ENCODE measurements at regions of chr13 and their contacts with region 1.

Region 1: DNA sequence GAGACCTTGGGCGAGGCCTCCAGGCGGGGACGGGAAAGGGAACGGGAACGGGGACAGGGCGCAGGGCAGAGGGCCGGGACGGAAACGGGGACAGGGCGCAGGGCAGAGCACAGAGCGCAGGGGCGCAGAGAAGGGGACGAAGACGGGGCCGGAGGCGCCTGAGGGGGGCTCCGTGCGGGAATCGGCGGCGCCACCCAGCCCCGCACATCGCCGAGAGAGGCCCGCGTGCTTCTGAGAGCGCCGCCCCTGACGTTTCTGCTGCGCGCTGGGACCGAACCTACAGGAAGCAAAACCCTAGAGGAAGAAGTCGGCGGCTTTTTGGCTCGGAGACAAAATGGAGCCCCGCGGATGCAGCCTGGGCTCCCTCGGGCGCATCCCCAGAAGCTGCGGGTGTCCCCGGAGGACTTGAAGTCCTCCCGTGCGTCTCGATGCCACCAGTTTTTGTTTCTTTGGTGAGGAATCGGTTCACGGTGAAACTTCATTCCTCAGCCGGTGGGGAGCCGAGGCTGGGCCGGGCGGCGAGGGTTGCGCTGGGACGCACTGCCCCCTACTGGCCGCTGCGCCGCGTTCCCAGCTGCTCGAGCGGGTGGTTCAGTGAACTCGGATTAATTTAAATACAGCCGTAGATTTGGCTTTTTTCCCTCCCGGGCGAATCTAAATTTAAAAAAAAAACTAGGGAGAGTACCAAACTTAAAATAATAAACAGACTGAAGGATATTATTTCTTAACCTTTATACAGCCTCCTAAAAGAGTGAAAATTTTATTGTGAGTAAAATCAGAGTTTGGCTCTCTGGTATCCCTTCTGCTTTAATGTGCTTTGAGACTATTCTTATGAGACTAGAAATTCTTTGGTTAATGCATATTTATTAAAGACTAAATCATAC is 350.0 kb upstream of the ARGLU1 start:
- DNase-seq: peak; percentile 77 to 82
- ATAC-seq: peak; percentile 86 to 93 (median 90)
- H3K4me3 ChIP-seq: peak overlapping the region; percentile 45 to 76 (median 63)
- H3K27ac ChIP-seq: peak overlapping the region; percentile 84 to 98 (median 95)
- H3K4me1 ChIP-seq: peaks cover 0 to 48% (median 17%) of the 10 kb centered on the region in 9 donors
- H3K27me3 ChIP-seq: peaks cover 0 to 3% (median 0%) of the 10 kb centered on the region in 7 donors
- CTCF ChIP-seq: peak; percentile 87 to 98 (median 95)

Region 2: DNA sequence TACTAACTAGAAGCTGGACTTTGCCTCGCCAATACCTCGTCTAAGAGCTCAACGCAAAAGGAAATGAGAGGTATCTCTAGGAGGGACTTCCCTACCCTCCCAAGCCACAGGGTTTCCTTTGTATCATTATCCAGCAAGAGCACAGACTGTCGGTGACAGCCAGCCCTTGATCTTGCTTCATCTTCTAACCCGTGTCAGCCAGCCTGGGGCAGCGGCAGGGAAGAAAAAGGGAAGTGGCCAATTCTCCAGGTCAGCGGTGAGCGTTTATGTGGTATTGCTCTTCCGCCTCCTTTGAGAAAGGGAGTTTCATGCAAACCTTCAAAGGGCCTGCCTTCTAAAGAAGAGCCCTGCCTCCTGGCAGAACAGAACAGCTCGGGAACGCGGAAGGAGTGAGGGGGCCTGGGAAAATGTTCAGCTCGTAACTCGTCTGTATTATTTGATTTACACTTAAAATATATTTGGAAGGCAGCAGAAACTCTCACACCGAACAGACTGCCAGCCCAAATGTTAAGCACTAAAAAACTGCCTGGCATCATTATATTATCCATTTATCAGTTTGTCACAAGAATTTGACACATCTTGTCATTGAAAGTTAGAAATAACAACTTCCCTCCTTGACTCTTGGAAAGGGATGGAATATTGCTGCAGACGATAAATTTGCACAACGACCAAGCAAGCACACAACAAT is 424.2 kb before region 1 on chr13:
- intact Hi-C with region 1: loop called in 1 of 10 experiments (anchors 5 kb)
- DNase-seq: no peak
- ATAC-seq: peak in 1 of 8 donors; percentile 26
- H3K4me3 ChIP-seq: peak overlapping the region in 1 of 10 donors; percentile 16
- H3K27ac ChIP-seq: peak overlapping the region in 3 of 10 donors; percentile 7 to 61 (median 37)
- H3K4me1 ChIP-seq: peaks cover 0 to 86% (median 36%) of the 10 kb centered on the region in 9 donors
- H3K27me3 ChIP-seq: peaks cover 0 to 36% (median 0%) of the 10 kb centered on the region in 7 donors
- CTCF ChIP-seq: no peak

Region 3: DNA sequence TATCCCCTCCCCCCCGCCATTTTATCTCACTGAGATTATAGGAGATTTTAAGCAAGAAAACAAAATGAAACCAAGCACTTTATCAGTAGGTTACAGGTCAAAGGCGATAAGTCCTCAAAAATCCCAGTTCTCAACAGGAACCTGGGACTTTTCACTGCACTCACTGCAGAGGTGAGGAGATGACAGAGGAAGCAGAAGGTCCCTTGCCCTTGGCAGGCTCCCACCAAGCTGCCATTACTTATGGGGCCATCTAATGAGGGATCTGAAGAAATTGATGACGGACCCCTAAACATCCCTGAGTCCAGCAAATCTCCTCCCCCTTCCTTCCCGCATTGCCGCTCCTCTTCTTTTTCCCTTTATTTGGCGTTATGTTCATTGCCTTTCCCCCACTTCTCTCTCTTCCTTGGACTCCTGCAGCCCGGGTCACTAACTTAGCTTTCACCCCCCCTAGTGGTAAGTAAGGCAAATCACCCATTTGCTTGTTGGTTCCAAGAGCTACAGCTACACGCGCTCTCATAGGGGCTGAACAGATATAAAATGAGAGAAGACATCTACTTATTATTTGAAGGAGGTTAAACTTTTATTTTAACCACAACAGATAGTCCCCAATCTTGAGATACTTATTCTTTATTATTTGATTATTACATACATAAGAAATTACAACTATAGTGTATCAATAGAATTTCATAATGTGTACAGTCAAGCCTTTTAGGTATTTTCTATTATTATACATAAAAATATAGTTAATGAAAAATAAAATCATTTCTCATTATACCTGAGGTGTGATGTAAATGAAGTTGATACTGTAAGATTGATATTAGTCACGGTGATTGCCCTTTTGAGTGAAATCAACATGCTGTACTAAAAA is 298.0 kb before region 1 on chr13:
- intact Hi-C with region 1: loop called in 4 of 10 experiments (anchors 5 to 10 kb)
- DNase-seq: peak in 1 of 2 donors; percentile 53
- ATAC-seq: peak; percentile 79 to 94 (median 90)
- H3K4me3 ChIP-seq: peak overlapping the region in 7 of 10 donors; percentile 12 to 45 (median 34)
- H3K27ac ChIP-seq: peak overlapping the region in 5 of 10 donors; percentile 33 to 71 (median 48)
- H3K4me1 ChIP-seq: peaks cover 0 to 33% (median 10%) of the 10 kb centered on the region in 9 donors
- H3K27me3 ChIP-seq: peaks cover 0 to 36% (median 0%) of the 10 kb centered on the region in 7 donors
- CTCF ChIP-seq: peak; percentile 71 to 86 (median 81)

Region 4: GRCh38 chr13:106701771-106702341 is 216.1 kb before region 1 on chr13:
- intact Hi-C with region 1: loop called in 7 of 10 experiments (anchors 2 to 10 kb)
- DNase-seq: peak; percentile 17 to 67
- ATAC-seq: peak; percentile 77 to 93 (median 90)
- H3K4me3 ChIP-seq: peak overlapping the region in 2 of 10 donors; percentile 0 to 19
- H3K27ac ChIP-seq: peak overlapping the region; percentile 58 to 86 (median 74)
- H3K4me1 ChIP-seq: peaks cover 0 to 57% (median 10%) of the 10 kb centered on the region in 9 donors
- H3K27me3 ChIP-seq: no peaks in the 10 kb centered on the region
- CTCF ChIP-seq: no peak

Region 5: GRCh38 chr13:106874323-106874722 is 43.6 kb before region 1 on chr13:
- intact Hi-C with region 1: loop called in 2 of 10 experiments (anchors 5 kb)
- DNase-seq: no peak
- ATAC-seq: peak in 7 of 8 donors; percentile 48 to 82 (median 75)
- H3K4me3 ChIP-seq: no peak overlapping the region
- H3K27ac ChIP-seq: peak overlapping the region in 8 of 10 donors; percentile 1 to 80 (median 50)
- H3K4me1 ChIP-seq: peaks cover 0 to 27% (median 6%) of the 10 kb centered on the region in 9 donors
- H3K27me3 ChIP-seq: no peaks in the 10 kb centered on the region
- CTCF ChIP-seq: no peak

Region 6: GRCh38 chr13:107205303-107206104 is 287.6 kb after region 1 on chr13:
- intact Hi-C with region 1: loop called in 1 of 10 experiments (anchors 5 kb)
- DNase-seq: peak; percentile 59 to 70
- ATAC-seq: peak in 7 of 8 donors; percentile 31 to 72 (median 65)
- H3K4me3 ChIP-seq: no peak overlapping the region
- H3K27ac ChIP-seq: peak overlapping the region in 4 of 10 donors; percentile 13 to 90 (median 28)
- H3K4me1 ChIP-seq: peaks cover 0 to 79% (median 32%) of the 10 kb centered on the region in 9 donors
- H3K27me3 ChIP-seq: peaks cover 0 to 7% (median 0%) of the 10 kb centered on the region in 7 donors
- CTCF ChIP-seq: peak; percentile 93 to 100 (median 98)

Measured in heart right ventricle (tissue), 16 donors.